ENCODE measurements at regions of chr17 and their contacts with region 1.

Region 1: DNA sequence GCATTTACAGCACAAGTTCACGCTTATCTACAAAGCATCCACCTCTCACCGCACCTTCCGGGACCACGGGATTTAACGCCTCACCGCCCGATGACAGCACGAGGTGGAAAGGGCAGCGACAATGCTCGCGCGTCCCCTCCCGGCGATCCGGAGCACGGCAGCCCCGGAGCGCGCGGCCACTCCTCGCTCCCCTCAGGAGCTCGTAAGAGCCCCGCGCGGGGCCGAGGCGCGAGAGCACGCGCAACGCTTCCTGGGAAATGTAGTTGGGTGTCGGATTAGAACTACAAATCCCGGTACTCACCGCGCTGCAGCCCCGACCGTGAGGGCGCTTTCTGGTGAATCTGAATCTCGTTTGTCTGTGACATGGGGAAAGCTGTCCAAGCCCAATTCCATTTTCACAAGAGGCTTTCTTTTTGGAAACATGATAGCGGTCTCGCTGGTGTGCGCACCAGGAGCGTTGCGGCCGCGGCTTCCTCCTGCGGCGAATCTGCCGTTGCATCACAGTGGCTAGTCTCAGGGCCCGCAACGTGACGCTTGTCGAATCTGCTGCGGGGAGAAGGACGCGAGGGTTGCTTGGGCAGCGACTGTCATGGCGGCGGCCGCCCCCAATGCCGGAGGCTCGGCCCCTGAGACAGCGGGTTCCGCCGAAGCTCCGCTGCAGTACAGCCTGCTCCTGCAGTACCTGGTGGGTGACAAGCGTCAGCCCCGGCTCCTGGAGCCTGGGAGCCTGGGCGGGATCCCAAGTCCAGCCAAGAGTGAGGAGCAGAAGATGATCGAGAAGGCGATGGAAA is at the start of gene TIMM22:
- DNase-seq: peak; percentile 94 to 95 (median 95)
- H3K4me3 ChIP-seq: peak within 1 kb of the TSS; percentile 84 to 99
- H3K4me3 Mint-ChIP-seq: peak within 1 kb of the TSS; percentile 96 to 99 (median 98)
- H3K27ac ChIP-seq: peak within 1 kb of the TSS; percentile 83
- H3K27ac Mint-ChIP-seq: peak within 1 kb of the TSS; percentile 96 to 99 (median 99)
- H3K4me1 ChIP-seq: peaks cover 18% of the 10 kb centered on the region
- H3K4me1 Mint-ChIP-seq: peaks cover 13 to 34% (median 22%) of the 10 kb centered on the region in 4 donors
- H3K27me3 ChIP-seq: no peaks in the 10 kb centered on the region
- H3K27me3 Mint-ChIP-seq: no peaks in the 10 kb centered on the region
- total RNA-seq, gene TIMM22: 12.3 to 13.2 TPM

Region 2: DNA sequence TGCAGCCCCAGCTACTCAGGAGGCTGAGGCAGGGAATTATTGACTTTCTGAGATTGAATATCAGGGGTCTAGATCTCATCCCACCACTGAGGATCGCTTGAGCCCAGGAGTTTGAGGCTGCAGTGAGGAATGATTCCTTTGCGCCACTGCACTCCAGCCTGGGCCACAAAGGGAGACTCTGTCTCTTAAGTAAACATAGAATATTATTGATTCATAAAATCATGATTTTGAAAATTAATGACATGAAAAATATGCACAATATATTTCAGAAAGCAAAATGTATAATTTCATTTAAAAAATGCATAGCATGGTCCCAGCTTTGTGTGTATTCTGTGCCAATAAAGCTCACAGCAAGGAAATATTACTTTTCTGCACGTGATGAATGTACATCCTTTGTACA is 280.5 kb before region 1 on chr17:
- CTCF ChIA-PET with region 1: interaction called, 5 read pairs
- POLR2A ChIA-PET with region 1: interaction called, 4 read pairs
- intact Hi-C with region 1: loop called (anchors 1 kb)
- DNase-seq: no peak
- H3K4me3 ChIP-seq: no peak overlapping the region
- H3K4me3 Mint-ChIP-seq: peak overlapping the region in 5 of 8 donors; percentile 17 to 66 (median 63)
- H3K27ac ChIP-seq: no peak overlapping the region
- H3K27ac Mint-ChIP-seq: no peak overlapping the region
- H3K4me1 ChIP-seq: peaks cover 19% of the 10 kb centered on the region
- H3K4me1 Mint-ChIP-seq: peaks cover 13 to 33% (median 23%) of the 10 kb centered on the region in 4 donors
- H3K27me3 ChIP-seq: no peaks in the 10 kb centered on the region
- H3K27me3 Mint-ChIP-seq: peaks cover 0 to 2% of the 10 kb centered on the region in 2 donors

Region 3: GRCh38 chr17:794876-795275 is 201.9 kb before region 1 on chr17:
- CTCF ChIA-PET with region 1: interaction called, 6 read pairs
- POLR2A ChIA-PET with region 1: interaction called, 5 read pairs
- intact Hi-C with region 1: loop called (anchors 1 kb)
- DNase-seq: peak in 4 of 5 donors; percentile 29 to 35 (median 30)
- H3K4me3 ChIP-seq: no peak overlapping the region
- H3K4me3 Mint-ChIP-seq: peak overlapping the region in 1 of 8 donors; percentile 26
- H3K27ac ChIP-seq: no peak overlapping the region
- H3K27ac Mint-ChIP-seq: peak overlapping the region in 2 of 7 donors; percentile 57 to 64
- H3K4me1 ChIP-seq: peaks cover 5% of the 10 kb centered on the region
- H3K4me1 Mint-ChIP-seq: peaks cover 3 to 9% (median 6%) of the 10 kb centered on the region in 4 donors
- H3K27me3 ChIP-seq: no peaks in the 10 kb centered on the region
- H3K27me3 Mint-ChIP-seq: no peaks in the 10 kb centered on the region

Region 4: GRCh38 chr17:879549-880442 is 117.0 kb before region 1 on chr17:
- CTCF ChIA-PET with region 1: interaction called, 18 read pairs
- POLR2A ChIA-PET with region 1: interaction called, 4 read pairs
- intact Hi-C with region 1: loop called (anchors 1 kb)
- DNase-seq: peak; percentile 66 to 73 (median 70)
- H3K4me3 ChIP-seq: no peak overlapping the region
- H3K4me3 Mint-ChIP-seq: peak overlapping the region in 1 of 8 donors; percentile 7
- H3K27ac ChIP-seq: no peak overlapping the region
- H3K27ac Mint-ChIP-seq: no peak overlapping the region
- H3K4me1 ChIP-seq: peaks cover 3% of the 10 kb centered on the region
- H3K4me1 Mint-ChIP-seq: peaks cover 4 to 12% (median 8%) of the 10 kb centered on the region in 4 donors
- H3K27me3 ChIP-seq: no peaks in the 10 kb centered on the region
- H3K27me3 Mint-ChIP-seq: peaks cover 16 to 29% of the 10 kb centered on the region in 2 donors